ENCODE measurements at regions of chr2 and their contacts with region 1.

Region 1: DNA sequence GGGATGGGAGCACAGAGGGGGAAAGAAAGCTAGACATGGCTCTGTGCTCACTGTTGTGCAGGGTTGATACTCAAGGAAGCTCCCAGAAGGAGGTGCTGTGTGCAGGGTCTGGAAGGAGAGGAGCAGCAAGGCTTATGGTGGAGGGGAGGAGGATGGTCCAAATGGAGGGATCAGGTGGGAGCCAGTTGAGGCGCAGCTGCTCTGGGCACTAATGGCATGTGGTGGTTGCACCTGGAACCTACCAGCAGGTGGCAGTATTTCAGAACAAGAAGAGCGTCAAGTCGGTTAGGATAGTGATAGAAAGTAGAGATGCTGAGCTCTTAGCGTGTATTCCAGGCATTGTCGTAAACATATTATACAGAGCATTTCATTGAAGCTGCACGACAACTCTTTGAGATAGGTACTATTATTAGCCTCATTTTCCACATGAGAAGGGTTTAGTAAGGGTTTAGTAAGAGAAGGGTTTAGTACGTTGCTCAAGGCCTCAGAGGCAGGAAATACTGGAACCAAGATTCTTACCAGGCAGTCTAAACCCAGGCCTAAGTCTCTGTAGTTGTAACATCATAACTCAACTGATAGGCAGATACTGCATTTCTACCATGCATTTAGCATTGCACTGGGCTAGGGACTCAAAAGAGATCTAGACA is 223.7 kb downstream of the CYP26B1 start:
- DNase-seq: peak; percentile 16 to 56 (median 23)
- H3K4me3 ChIP-seq: no peak overlapping the region
- H3K4me3 Mint-ChIP-seq: no peak overlapping the region
- H3K27ac ChIP-seq: no peak overlapping the region
- H3K27ac Mint-ChIP-seq: no peak overlapping the region
- H3K4me1 ChIP-seq: no peaks in the 10 kb centered on the region
- H3K4me1 Mint-ChIP-seq: no peaks in the 10 kb centered on the region
- H3K27me3 ChIP-seq: no peaks in the 10 kb centered on the region
- H3K27me3 Mint-ChIP-seq: peaks cover 0 to 1% of the 10 kb centered on the region in 2 donors

Region 2: DNA sequence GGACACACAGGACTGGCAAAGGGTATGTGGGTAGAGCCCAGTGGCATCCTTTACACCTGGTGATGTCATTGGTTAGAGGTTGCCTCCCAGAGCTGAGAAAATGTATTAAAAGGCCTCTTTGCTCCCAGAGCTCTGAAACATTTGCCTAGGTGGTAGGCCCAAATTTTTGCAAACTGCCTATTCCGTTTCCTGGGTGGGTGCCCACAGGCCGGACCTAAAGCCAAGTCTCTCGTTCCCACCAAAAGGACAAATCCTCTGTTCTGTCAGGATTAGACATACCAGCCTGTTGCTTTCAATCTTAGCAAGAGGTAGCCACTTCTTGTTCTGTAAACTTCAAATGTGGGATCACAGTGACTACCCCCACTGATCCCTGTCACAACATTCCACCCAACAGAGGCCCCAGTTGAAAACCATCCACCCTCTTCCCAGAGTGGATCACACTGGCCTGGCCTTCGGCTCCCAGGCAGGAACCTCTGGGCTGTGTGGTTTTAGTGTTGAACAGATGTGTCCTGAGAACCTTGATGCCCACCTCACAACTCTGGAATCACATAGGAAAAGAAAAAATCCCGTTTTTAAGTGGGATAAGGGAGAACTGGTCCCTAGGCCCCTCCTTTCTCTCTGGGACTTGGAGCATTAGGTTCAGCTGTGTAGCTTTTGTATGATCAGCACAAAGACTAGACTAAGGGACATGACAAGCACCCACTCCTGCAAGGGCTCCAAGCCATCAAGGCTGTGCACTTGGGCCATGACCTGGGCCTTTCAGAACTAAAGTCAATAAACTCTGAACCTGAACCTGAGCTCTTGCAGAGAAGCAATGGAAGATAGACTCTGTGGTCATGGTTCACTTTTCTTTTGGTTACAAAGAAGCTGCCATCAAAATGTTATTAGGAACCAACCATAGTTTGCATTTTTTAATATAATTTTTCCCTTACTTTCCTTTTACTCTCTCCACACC is 12.3 kb after region 1 on chr2:
- CTCF ChIA-PET with region 1: interaction called, 12 read pairs
- POLR2A ChIA-PET with region 1: no interaction called
- DNase-seq: no peak
- H3K4me3 ChIP-seq: no peak overlapping the region
- H3K4me3 Mint-ChIP-seq: no peak overlapping the region
- H3K27ac ChIP-seq: no peak overlapping the region
- H3K27ac Mint-ChIP-seq: no peak overlapping the region
- H3K4me1 ChIP-seq: no peaks in the 10 kb centered on the region
- H3K4me1 Mint-ChIP-seq: no peaks in the 10 kb centered on the region
- H3K27me3 ChIP-seq: no peaks in the 10 kb centered on the region
- H3K27me3 Mint-ChIP-seq: peaks cover 4% of the 10 kb centered on the region in 2 donors

Region 3: DNA sequence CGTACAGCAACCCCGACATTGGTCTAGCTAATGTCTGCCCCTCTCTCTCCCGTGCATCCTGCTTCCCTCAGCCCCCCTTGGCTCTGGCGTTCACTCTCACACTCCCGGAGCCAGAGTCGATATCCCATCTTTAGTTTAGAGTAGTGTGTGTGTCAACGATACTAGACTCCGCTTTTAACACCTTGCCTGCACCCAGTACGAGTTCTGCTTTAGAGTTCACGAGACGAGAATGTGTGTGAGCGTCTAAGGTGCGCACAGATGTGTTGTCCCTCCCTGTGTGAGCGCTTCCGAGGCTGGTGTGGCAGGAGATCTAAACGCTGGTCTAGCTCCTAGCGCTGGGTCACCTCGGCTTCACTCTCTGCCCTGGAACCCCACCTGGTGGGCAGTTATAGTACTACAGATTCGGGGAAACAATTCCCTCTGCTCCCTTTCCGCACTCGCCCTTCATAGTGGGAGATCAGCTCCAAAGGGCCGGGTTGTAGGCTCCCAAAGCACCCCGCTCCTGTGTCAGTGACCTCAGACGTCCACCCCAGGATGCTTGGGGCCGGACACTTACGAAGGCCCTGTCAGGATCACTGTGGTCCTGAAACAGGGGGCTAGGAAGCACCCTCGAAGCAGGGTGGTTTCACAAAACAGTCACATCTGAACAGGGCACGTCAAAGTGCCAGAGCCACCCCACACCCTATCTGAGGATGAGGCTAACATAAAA is 226.3 kb after region 1 on chr2:
- CTCF ChIA-PET with region 1: interaction called, 15 read pairs
- POLR2A ChIA-PET with region 1: no interaction called
- DNase-seq: peak; percentile 31 to 60 (median 41)
- H3K4me3 ChIP-seq: peak overlapping the region; percentile 61
- H3K4me3 Mint-ChIP-seq: peak overlapping the region; percentile 15 to 86 (median 82)
- H3K27ac ChIP-seq: no peak overlapping the region
- H3K27ac Mint-ChIP-seq: peak overlapping the region in 1 of 8 donors; percentile 11
- H3K4me1 ChIP-seq: peaks cover 12% of the 10 kb centered on the region
- H3K4me1 Mint-ChIP-seq: peaks cover 34 to 45% (median 43%) of the 10 kb centered on the region in 3 donors
- H3K27me3 ChIP-seq: peaks cover 42% of the 10 kb centered on the region
- H3K27me3 Mint-ChIP-seq: peaks cover 48 to 82% of the 10 kb centered on the region in 2 donors

Region 4: GRCh38 chr2:72579591-72580180 is 655.7 kb after region 1 on chr2:
- CTCF ChIA-PET with region 1: interaction called, 18 read pairs
- POLR2A ChIA-PET with region 1: no interaction called
- DNase-seq: peak in 1 of 5 donors; percentile 6
- H3K4me3 ChIP-seq: no peak overlapping the region
- H3K4me3 Mint-ChIP-seq: no peak overlapping the region
- H3K27ac ChIP-seq: no peak overlapping the region
- H3K27ac Mint-ChIP-seq: no peak overlapping the region
- H3K4me1 ChIP-seq: no peaks in the 10 kb centered on the region
- H3K4me1 Mint-ChIP-seq: peaks cover 0 to 2% (median 0%) of the 10 kb centered on the region in 3 donors
- H3K27me3 ChIP-seq: no peaks in the 10 kb centered on the region
- H3K27me3 Mint-ChIP-seq: peaks cover 0 to 1% of the 10 kb centered on the region in 2 donors

Measured in CD8-positive, alpha-beta memory T cell (primary cell).